Tibial artery (tissue), 4 donors: ENCODE measurements at regions of chr16 and their contacts with region 1.

Region 1: GRCh38 chr16:29995911-29996772 is at the start of gene INO80E:
- DNase-seq: peak; percentile 98 to 99
- H3K4me3 ChIP-seq: peak within 1 kb of the TSS; percentile 66 to 75
- H3K27ac ChIP-seq: peak within 1 kb of the TSS; percentile 87 to 95
- H3K4me1 ChIP-seq: peaks cover 0 to 23% (median 18%) of the 10 kb centered on the region in 4 donors
- H3K27me3 ChIP-seq: no peaks in the 10 kb centered on the region
- CTCF ChIP-seq: no peak

Region 2: GRCh38 chr16:29815793-29816693 is 180.1 kb before region 1 on chr16 and contains the start of gene PAGR1:
- intact Hi-C with region 1: loop called (anchors 10 kb)
- DNase-seq: peak; percentile 98 to 99
- H3K4me3 ChIP-seq: peak within 1 kb of the TSS; percentile 63 to 79
- H3K27ac ChIP-seq: peak within 1 kb of the TSS; percentile 90 to 97
- H3K4me1 ChIP-seq: peaks cover 2 to 64% (median 49%) of the 10 kb centered on the region in 4 donors
- H3K27me3 ChIP-seq: no peaks in the 10 kb centered on the region
- CTCF ChIP-seq: peak; percentile 84 to 92

Region 3: DNA sequence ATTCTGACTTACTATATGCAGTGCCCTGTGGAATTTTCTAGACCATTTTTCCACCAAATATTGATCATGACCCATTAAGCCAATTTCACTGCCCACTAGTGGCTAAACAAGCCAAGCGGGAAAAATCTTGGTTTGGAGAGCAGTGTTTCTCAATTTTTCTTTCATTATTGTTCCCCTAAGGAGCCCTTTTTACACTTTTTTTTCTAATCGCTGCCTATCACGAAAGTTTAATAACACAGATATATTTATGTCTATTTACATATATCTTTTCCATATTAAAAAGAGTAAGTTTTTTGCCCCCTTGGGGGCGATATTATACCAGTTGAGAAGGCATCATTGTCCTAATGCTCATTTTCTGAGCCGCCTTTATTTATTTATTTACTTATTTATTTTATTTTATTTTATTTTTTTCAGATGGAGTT is 45.7 kb after region 1 on chr16:
- intact Hi-C with region 1: no loop called
- DNase-seq: no peak
- H3K4me3 ChIP-seq: no peak overlapping the region
- H3K27ac ChIP-seq: no peak overlapping the region
- H3K4me1 ChIP-seq: no peaks in the 10 kb centered on the region
- H3K27me3 ChIP-seq: peaks cover 0 to 32% of the 10 kb centered on the region in 2 donors
- CTCF ChIP-seq: peak; percentile 37 to 47